Motor neuron (in vitro differentiated cells): ENCODE measurements at regions of chr17 and their contacts with region 1.

Region 1: GRCh38 chr17:34892461-34893249 is 68.6 kb downstream of the CCT6B start:
- ATAC-seq: peak; percentile 90 to 94 (median 94)
- H3K4me3 ChIP-seq: no peak overlapping the region
- H3K27ac ChIP-seq: peak overlapping the region in 1 of 2 donors; percentile 24
- H3K4me1 ChIP-seq: peaks cover 29 to 33% of the 10 kb centered on the region in 2 donors

Region 2: DNA sequence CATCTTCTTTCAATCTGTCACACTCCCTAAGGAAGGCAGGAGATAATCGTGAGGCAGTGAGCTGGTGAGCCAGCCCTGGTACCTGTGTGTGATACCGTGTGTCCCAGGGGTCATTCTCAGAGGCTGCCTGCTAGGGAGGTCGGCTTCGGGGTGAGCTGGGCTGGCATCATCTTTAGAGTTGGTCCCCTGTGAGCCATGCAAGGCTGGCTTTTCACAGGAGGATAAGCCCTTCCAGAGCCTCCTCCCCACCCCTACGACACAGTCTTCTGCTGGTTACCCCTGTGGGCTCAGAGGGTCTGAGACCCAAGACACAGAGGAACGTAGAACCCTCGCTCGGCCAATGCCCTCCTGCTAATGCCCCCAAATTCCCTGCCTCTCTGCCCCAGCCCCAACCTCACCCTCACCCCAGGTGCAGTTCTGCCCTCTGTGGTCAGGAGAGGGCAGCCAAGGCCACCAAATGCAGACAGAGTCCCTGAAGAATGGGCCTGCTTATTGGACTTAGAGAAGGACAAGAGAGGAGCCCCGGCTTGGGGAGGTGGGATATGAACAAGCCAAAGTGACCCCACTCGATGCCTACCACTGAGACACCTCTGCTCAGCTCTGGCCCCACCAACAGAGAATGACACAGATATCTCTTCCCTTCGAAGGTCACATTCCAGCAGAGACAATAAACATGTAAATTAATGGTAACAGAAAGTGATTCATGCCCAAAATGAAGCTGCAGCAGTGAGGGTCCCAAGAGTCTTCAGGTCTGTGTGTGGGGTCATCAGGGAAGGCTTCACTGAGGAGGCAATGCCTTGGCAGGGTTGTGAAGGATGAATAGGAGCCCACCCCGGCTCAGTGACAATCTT is 448.8 kb before region 1 on chr17:
- in situ Hi-C with region 1: loop called in 2 of 9 experiments (anchors 25 kb)
- ATAC-seq: peak in 7 of 8 experiments; percentile 37 to 93 (median 91)
- H3K4me3 ChIP-seq: no peak overlapping the region
- H3K27ac ChIP-seq: no peak overlapping the region
- H3K4me1 ChIP-seq: peaks cover 0 to 35% of the 10 kb centered on the region in 2 donors

Region 3: DNA sequence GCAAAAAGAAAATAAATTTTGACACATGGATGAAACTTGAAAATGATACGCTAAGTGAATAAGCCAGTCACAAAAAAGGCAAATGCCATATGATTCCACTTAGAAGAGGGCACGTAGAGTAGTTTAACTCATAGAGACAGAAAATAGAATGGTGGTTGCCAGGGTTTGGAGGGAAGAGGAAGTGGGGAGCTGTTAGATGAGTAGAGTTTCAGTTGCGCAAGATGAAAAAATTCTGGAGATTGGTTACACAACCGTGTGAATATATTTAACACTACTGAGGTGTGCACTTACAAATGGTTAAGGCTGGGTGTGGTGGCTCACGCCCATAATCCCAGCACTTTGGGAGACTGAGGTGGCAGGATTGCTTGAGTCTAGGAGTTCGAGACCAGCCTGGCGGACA is 406.7 kb before region 1 on chr17:
- in situ Hi-C with region 1: no loop called
- ATAC-seq: no peak
- H3K4me3 ChIP-seq: no peak overlapping the region
- H3K27ac ChIP-seq: no peak overlapping the region
- H3K4me1 ChIP-seq: peaks cover 6 to 13% of the 10 kb centered on the region in 2 donors

Region 4: DNA sequence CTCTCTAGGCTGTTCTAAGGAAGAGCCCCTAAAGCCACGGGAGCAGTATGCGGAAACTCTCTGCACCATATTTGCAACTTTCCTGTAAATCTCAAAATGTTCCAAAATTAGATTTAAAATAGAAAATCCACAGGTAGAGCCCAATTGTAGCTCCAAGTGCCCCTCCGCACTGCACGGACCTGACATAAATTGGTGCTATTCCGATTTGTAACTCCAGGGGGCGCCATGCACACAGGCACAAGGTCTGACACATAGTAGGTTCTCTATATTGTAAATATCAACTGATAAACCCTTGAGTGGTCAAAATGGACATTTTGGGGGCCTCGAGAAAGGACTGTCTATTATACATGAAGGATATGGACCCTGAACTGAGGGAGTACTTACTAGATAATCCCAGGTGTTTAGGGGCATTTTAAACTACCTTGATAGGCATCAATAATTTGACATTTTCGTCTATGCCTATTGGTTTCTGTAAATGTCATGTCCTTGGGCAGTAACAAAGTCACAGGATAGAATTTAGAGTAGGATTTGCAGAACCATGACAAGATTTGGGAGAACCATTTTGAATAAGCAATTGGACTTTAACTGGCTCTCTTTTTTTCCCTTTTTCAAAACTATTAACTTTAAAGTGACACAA is 349.8 kb before region 1 on chr17:
- in situ Hi-C with region 1: loop called in 1 of 9 experiments (anchors 25 kb)
- ATAC-seq: peak in 4 of 8 experiments; percentile 24 to 48 (median 38)
- H3K4me3 ChIP-seq: no peak overlapping the region
- H3K27ac ChIP-seq: no peak overlapping the region
- H3K4me1 ChIP-seq: peaks cover 0 to 3% of the 10 kb centered on the region in 2 donors

Region 5: DNA sequence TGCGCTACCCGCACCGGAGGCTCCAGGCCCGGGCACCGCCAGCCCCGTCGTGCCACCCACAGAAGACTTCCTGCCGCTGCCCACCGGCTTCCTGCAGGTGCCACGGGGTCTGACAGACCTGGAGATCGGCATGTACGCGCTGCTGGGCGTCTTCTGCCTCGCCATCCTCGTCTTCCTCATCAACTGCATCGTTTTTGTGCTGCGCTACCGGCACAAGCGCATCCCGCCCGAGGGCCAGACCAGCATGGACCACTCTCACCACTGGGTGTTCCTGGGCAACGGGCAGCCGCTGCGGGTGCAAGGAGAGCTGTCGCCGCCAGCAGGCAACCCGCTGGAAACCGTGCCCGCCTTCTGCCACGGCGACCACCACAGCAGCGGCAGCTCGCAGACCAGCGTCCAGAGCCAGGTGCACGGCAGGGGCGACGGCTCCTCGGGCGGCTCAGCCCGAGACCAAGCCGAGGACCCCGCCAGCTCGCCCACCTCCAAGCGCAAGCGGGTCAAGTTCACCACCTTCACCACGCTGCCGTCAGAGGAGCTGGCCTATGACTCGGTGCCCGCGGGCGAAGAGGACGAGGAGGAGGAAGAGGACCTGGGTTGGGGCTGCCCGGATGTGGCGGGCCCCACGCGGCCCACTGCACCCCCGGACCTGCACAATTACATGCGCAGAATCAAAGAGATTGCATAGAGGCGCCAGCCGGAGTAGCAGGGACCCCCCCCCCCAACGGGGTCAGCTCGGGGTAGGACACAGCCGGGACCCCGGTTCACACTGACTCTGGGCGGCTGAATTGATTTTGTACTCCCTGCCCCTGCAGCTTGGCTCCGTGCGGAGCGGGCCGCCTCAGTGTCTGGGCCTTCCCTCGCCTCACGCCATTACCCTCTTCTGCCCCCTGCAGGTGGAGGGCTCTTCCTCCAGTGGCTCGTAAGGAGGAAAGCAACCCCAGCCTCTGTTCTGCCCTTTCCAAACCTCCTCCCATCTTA is 254.8 kb before region 1 on chr17:
- in situ Hi-C with region 1: loop called in 1 of 9 experiments (anchors 25 kb)
- ATAC-seq: peak; percentile 88 to 100 (median 94)
- H3K4me3 ChIP-seq: no peak overlapping the region
- H3K27ac ChIP-seq: no peak overlapping the region
- H3K4me1 ChIP-seq: peaks cover 7 to 13% of the 10 kb centered on the region in 2 donors

Region 6: GRCh38 chr17:34797720-34798119 is 94.9 kb before region 1 on chr17:
- in situ Hi-C with region 1: loop called in 1 of 9 experiments (anchors 25 kb)
- ATAC-seq: peak; percentile 69 to 92 (median 82)
- H3K4me3 ChIP-seq: no peak overlapping the region
- H3K27ac ChIP-seq: no peak overlapping the region
- H3K4me1 ChIP-seq: peaks cover 29 to 57% of the 10 kb centered on the region in 2 donors

Region 7: GRCh38 chr17:35170968-35171771 is 278.5 kb after region 1 on chr17:
- in situ Hi-C with region 1: no loop called
- ATAC-seq: peak in 3 of 8 experiments; percentile 57 to 83 (median 81)
- H3K4me3 ChIP-seq: no peak overlapping the region
- H3K27ac ChIP-seq: no peak overlapping the region
- H3K4me1 ChIP-seq: no peaks in the 10 kb centered on the region